Panc1 (cell line): ENCODE measurements at regions of chr2 and their contacts with region 1.

Region 1: DNA sequence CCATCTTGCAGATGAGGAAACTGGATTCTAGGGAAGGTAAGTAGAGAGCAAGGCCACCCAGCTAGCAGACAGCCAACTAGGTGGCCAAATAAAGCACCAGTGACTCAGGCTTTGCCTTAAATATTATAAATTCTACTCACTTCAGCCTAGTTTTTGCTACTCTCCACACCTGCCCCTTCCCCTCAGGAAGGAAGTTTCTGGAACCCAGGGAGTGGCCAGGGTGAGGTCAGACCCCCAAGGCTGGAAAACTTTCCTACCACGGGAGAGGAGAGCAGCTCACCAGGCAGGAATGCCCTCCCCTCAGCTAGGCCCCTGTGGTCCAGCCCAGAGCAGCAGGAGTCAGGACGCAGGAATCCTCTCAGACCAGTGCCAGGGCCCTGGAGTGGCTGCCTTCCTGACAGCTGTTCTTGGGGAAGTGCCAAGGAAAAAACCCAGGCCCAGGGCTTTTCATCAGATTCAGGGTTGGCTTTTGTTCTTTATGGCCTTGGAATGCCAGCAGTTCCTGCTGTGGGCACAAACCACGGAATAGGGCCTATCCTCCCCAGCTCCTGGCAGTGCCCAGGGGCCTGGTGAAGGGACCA is 5.1 kb upstream of the PAX8 start:
- DNase-seq: peak; percentile 15
- ATAC-seq: peak; percentile 92
- H3K4me3 ChIP-seq: no peak overlapping the region
- H3K27ac ChIP-seq: peak overlapping the region; percentile 26; the same call in 1 of the 2 replicates
- H3K4me1 ChIP-seq: peaks cover 11% of the 10 kb centered on the region
- H3K27me3 ChIP-seq: no peaks in the 10 kb centered on the region
- CTCF ChIP-seq: no peak

Region 2: GRCh38 chr2:113273027-113273551 is 10.7 kb before region 1 on chr2:
- CTCF ChIA-PET with region 1: interaction called, 4 read pairs
- POLR2A ChIA-PET with region 1: interaction called, 11 read pairs
- in situ Hi-C with region 1: no loop called
- intact Hi-C with region 1: no loop called
- DNase-seq: no peak
- ATAC-seq: peak; percentile 96
- H3K4me3 ChIP-seq: no peak overlapping the region
- H3K27ac ChIP-seq: no peak overlapping the region
- H3K4me1 ChIP-seq: peaks cover 7% of the 10 kb centered on the region; the same call in 1 of the 2 replicates
- H3K27me3 ChIP-seq: peaks cover 9% of the 10 kb centered on the region; the same call in 1 of the 2 replicates
- CTCF ChIP-seq: no peak

Region 3: DNA sequence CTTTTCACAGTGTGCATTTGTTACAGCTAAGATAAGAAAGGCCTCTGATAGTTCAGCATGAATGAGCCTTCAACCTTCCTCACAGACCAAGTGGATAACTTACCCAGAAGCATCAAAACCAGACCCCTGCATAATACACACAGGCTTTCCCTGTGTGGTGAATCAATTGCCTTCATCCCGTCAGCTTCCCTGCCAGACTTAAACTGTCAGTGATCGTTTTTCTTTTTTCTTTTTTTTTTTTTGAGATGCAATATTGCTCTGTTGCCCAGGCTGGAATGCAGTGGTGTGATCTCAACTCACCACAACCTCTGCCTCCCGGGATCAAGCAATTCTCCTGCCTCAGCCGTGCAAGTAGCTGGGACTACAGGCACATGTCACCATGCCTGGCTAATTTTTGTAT is 493.2 kb after region 1 on chr2:
- CTCF ChIA-PET with region 1: no interaction called
- POLR2A ChIA-PET with region 1: no interaction called
- in situ Hi-C with region 1: no loop called
- intact Hi-C with region 1: no loop called
- DNase-seq: no peak
- ATAC-seq: no peak
- H3K4me3 ChIP-seq: no peak overlapping the region
- H3K27ac ChIP-seq: no peak overlapping the region
- H3K4me1 ChIP-seq: no peaks in the 10 kb centered on the region
- H3K27me3 ChIP-seq: no peaks in the 10 kb centered on the region
- CTCF ChIP-seq: no peak